ENCODE measurements at regions of chr16 and their contacts with region 1.

Region 1: GRCh38 chr16:1308977-1309885 is at the start of gene UBE2I:
- DNase-seq: peak; percentile 96 to 100 (median 99)

Region 2: DNA sequence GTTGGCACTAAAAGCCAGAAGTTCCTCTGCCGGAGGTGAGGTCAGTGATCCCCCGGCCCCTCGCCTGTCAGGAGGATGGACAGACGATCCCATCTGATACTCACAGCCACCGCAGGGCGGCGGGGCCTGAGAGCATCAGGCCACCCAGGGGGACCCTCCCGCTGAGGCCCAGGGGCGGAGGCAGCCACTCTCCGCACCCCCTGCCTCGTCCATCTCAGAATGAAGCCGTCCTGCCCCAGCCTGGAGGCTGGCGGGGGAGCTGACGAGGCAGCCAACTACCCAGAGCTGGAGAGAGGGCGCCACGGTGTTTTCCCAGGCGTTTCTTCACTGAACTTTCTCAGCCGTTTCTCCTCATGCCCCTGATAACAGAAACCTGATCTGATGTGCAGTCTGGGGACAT is 30.8 kb before region 1 on chr16:
- intact Hi-C with region 1: no loop called
- DNase-seq: no peak

Region 3: DNA sequence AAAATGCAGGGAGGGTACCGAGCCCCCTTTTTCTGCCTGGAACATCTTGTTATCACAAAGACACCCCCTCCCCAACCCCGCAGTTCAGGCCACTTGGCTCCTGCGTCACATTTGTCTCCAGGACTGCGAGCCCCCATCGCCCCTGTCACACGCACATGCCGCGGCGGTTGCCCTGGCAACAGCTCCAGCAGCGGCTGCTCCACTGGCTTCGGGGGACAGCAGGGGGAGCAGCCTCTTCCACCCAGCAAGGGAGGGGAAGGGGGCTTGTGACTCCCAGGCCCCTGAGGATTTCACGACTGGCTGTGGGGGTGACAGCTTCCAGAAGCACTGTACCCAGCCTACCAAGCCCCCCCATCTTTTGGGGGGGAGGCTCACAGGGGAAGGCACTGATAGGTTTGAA is 26.8 kb after region 1 on chr16:
- intact Hi-C with region 1: loop called (anchors 2 kb)
- DNase-seq: peak in 38 of 42 donors; percentile 24 to 72 (median 50)

Region 4: DNA sequence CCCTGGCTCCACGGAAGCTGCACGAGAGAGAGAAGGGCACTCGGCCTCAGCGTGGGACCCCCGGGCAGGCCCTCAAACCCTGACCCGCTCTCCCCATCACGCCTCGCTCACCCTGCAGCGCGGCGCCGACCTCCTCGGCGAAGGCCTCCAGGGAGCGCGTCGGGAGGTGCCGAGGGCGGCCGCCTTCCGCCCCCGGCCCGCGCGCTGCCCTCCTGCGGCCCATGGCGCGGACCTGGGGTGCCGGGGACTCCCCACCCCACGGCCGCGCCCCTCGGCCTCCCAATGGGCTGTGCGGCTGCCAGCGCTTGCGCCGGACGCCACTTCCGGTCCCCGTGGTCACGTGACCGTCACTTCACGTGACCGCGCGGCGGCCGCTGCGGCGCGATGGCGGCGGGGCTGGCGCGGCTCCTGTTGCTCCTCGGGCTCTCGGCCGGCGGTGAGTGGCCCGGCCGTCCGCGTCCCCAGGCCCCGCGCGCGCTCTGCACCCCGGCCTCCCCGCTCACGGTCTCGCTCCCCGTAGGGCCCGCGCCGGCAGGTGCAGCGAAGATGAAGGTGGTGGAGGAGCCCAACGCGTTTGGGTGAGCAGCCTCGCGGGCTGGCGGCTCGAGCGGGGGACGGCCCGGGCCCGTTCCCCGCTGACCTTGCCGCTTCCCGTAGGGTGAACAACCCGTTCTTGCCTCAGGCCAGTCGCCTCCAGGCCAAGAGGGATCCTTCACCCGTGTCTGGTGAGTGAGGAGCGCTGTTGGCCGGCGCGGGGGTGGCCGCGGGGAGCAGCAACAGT is 42.5 kb after region 1 on chr16 and contains the starts of genes GNPTG and TSR3:
- intact Hi-C with region 1: loop called (anchors 5 kb)
- DNase-seq: peak; percentile 24 to 89 (median 76)

Region 5: DNA sequence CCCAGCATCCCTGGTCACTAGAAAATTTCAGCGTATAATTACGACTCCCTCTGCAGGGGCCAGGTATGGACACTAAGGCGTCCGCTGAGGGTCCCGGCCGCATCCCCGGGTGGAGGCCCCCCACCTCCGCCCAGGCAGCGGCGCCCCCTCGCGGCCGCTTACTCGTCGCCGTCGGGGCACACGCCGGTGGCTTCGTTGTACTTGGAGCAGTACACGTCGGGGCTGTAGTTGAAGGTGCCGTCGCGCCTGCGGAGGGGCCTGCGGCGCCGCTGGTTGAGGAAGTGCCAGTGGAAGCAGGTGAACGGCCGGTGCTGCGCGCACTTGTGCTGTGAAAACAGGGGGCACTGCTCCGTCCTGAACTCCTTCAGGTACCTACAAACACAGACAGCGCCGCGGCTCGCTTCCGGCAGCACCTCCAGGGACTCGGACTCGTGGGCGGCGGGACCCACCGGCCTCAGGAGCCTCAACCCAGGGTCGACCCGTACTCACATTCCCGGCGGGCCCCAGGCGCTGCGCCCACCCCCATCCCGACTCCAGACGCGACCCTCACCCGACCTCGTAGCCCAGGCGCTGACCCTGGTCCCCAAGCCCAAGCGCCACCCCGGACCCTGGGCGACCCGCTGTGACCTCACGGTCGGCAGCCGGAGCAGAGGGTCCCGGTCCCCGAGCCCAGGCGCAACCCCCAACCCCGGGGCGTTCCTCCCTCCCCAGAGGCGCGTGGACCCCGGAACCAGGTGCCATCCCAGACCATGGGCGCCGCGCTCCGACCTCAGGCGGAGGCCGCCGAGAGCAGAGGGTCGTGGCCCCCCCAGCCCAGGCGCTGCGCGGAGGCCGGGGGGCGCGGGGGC is 104.7 kb after region 1 on chr16:
- intact Hi-C with region 1: loop called (anchors 10 kb)
- DNase-seq: peak in 37 of 42 donors; percentile 14 to 77 (median 46)

Measured in head of caudate nucleus (tissue), 42 donors.